Tibial artery (tissue), 4 donors: ENCODE measurements at regions of chr3 and their contacts with region 1.

Region 1: DNA sequence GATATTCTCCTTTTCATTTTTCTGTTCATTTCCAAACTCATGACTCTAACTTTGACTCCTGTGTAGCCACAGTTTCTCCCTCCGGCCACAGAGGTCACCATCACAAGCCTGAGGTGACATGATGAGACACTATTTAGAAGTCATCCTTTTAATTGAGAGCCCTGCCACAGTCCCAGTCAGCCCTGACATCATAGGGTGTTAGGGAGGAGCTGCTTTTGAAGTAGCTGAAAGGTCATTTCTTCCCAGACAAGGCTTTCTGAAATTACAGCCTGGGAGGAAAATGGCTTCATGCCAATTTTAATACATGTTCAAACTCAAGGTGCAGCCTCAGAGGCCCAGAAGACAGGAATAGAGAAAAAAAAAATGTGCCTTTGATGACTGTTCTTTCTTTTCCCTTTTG is 532.8 kb upstream of the TGFBR2 start:
- DNase-seq: no peak
- H3K4me3 ChIP-seq: no peak overlapping the region
- H3K27ac ChIP-seq: no peak overlapping the region
- H3K4me1 ChIP-seq: no peaks in the 10 kb centered on the region
- H3K27me3 ChIP-seq: no peaks in the 10 kb centered on the region
- CTCF ChIP-seq: no peak

Region 2: DNA sequence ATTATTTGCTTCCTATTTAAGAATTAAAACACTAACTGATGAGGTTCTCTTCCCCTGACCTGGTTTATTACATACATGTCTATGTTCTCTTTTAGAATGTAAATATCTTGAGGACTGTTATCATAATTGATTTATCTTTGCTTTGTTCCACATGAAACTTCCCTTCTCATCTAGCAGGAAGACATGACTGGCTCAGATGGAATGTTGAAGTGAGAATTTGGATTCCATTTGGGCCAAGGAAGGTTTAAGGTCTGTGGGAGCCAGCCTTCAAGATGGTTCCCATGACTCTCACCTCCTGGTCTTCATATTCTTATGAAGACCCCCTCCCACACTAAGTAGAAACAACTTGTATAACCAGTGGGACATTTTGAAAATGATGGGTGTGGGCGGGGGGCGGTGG is 1043.0 kb after region 1 on chr3:
- intact Hi-C with region 1: loop called (anchors 10 kb)
- DNase-seq: no peak
- H3K4me3 ChIP-seq: no peak overlapping the region
- H3K27ac ChIP-seq: no peak overlapping the region
- H3K4me1 ChIP-seq: no peaks in the 10 kb centered on the region
- H3K27me3 ChIP-seq: no peaks in the 10 kb centered on the region
- CTCF ChIP-seq: no peak